ENCODE measurements at regions of chr20 and their contacts with region 1.

Region 1: GRCh38 chr20:571754-572441 is 28.3 kb upstream of the CSNK2A1 start:
- DNase-seq: peak; percentile 74 to 87
- ATAC-seq: peak; percentile 58 to 82 (median 74)
- H3K4me3 ChIP-seq: peak overlapping the region; percentile 22
- H3K27ac ChIP-seq: peak overlapping the region; percentile 57
- H3K4me1 ChIP-seq: peaks cover 6% of the 10 kb centered on the region
- H3K27me3 ChIP-seq: peaks cover 0 to 22% (median 2%) of the 10 kb centered on the region in 3 donors
- CTCF ChIP-seq: no peak

Region 2: DNA sequence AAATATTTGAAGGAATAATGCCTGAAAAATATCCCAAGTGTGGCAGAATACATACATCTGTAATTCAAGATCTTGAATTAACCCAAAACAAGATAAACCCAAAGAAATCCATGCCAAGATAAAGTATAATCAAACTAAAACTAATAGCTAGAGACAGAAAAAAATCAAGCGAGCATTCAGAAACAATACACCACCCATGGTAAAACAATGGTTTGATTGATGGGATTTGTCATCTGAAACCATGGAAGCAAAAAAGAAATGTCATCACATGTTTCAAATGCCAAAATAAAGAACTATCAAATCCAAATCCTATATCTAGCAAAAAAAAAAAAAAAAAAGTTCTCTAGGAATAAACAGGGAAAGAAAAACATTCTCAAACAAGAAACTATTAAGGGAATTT is 419.8 kb before region 1 on chr20:
- intact Hi-C with region 1: no loop called
- DNase-seq: no peak
- ATAC-seq: no peak
- H3K4me3 ChIP-seq: no peak overlapping the region
- H3K27ac ChIP-seq: no peak overlapping the region
- H3K4me1 ChIP-seq: no peaks in the 10 kb centered on the region
- H3K27me3 ChIP-seq: peaks cover 0 to 3% (median 0%) of the 10 kb centered on the region in 3 donors
- CTCF ChIP-seq: no peak

Region 3: DNA sequence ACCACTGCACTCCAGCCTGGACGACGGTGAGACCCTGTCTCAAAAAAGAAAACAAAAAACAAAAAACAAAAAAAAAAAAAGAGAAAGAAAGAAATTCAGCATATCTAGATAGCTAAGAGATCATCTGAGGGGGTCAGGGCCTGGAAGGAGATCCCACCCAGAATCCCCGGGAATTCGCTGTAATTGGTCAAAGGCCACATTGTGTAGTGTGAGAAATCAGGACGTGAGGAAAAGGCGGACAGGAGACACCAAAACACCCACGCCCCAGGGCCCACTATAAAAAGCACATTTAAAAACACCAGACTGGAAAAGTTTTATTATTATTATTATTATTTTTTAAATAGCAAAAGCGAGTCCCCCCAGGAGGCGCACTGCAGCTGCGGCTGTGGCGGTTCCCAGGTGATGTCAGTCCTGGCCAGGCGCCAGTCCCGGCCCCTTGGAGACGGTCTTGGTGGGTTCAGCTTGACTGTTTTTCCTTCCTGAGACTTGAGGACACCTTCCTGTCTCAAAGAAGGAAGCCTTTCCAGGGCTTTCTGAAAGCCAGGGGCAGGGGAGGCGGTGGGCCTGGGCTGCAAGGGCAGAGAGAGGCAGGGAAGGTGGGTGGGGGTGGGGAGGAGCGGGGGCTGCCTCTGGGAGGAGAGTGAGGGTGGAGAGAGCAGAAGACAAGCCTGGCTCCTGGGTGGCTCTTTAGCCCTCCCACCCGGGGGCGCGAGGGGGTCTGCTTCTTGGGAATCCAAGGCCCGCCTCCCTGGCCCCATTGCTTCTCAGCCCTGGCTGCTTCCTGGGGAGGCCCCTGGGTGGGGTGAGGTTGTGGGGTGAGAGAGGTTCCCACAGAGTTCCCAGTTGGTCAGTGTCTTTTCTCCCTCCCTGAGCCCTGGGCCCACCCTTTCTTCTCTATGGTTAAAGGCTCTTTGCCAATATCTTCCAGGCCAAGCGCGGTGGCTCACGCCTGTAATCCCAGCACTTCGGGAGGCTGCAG is 23.7 kb after region 1 on chr20:
- intact Hi-C with region 1: no loop called
- DNase-seq: peak; percentile 61 to 87
- ATAC-seq: peak in 2 of 4 donors; percentile 40 to 61
- H3K4me3 ChIP-seq: no peak overlapping the region
- H3K27ac ChIP-seq: peak overlapping the region; percentile 50
- H3K4me1 ChIP-seq: no peaks in the 10 kb centered on the region
- H3K27me3 ChIP-seq: no peaks in the 10 kb centered on the region
- CTCF ChIP-seq: peak; percentile 9

Region 4: GRCh38 chr20:609371-609964 is 37.6 kb after region 1 on chr20:
- intact Hi-C with region 1: loop called in 1 of 2 experiments (anchors 5 kb)
- DNase-seq: peak in 1 of 2 donors; percentile 17
- ATAC-seq: no peak
- H3K4me3 ChIP-seq: peak overlapping the region; percentile 64
- H3K27ac ChIP-seq: peak overlapping the region; percentile 63
- H3K4me1 ChIP-seq: no peaks in the 10 kb centered on the region
- H3K27me3 ChIP-seq: peaks cover 0 to 51% (median 14%) of the 10 kb centered on the region in 3 donors
- CTCF ChIP-seq: no peak

Region 5: GRCh38 chr20:634556-634955 is 62.7 kb after region 1 on chr20:
- intact Hi-C with region 1: no loop called
- DNase-seq: no peak
- ATAC-seq: no peak
- H3K4me3 ChIP-seq: no peak overlapping the region
- H3K27ac ChIP-seq: no peak overlapping the region
- H3K4me1 ChIP-seq: no peaks in the 10 kb centered on the region
- H3K27me3 ChIP-seq: no peaks in the 10 kb centered on the region
- CTCF ChIP-seq: no peak

Measured in psoas muscle (tissue), 8 donors.